Activated naive CD4-positive, alpha-beta T cell treated with anti-CD3 and anti-CD28 coated beads for 36 hours (primary cell): ENCODE measurements at regions of chr13 and their contacts with region 1.

Region 1: GRCh38 chr13:32682740-32683139 is 96.5 kb downstream of the PDS5B start:
- DNase-seq: no peak
- H3K4me3 Mint-ChIP-seq: no peak overlapping the region
- H3K27ac Mint-ChIP-seq: no peak overlapping the region
- H3K4me1 Mint-ChIP-seq: peaks cover 17% of the 10 kb centered on the region
- H3K27me3 Mint-ChIP-seq: no peaks in the 10 kb centered on the region

Region 2: GRCh38 chr13:32381539-32381938 is 301.2 kb before region 1 on chr13:
- CTCF ChIA-PET with region 1: no interaction called
- intact Hi-C with region 1: no loop called
- DNase-seq: peak; percentile 10
- H3K4me3 Mint-ChIP-seq: no peak overlapping the region
- H3K27ac Mint-ChIP-seq: no peak overlapping the region
- H3K4me1 Mint-ChIP-seq: no peaks in the 10 kb centered on the region
- H3K27me3 Mint-ChIP-seq: no peaks in the 10 kb centered on the region

Region 3: DNA sequence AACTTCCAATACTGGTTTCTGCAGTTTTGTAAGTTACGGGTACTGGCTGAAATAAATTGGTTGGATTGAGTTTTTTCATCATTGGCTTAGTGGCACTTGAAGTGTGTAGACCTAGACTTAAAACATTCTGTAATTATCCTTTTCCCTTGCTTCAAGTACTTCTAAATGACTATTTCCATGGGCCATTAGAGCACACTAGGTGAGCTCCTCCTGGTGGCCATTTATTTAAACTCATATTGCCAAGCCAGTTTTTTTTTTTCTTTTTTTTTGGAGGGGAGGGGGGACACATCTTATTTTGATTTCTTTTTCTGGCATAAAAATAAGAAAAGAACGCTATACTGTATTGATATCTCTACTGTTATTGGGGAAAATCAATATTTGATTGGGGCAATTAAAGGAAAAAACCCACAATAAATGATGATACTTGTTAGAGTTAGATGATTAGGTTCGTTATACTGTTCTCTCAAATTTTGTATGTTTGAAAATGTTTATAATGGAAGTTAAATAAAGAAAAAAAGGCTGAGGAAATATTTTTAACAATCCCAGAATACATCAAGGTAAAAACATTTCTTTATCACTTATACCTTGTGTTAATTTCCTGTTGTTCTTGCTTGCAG is 13.6 kb before region 1 on chr13:
- CTCF ChIA-PET with region 1: interaction called, 12 read pairs
- intact Hi-C with region 1: no loop called
- DNase-seq: peak; percentile 10
- H3K4me3 Mint-ChIP-seq: no peak overlapping the region
- H3K27ac Mint-ChIP-seq: no peak overlapping the region
- H3K4me1 Mint-ChIP-seq: peaks cover 6% of the 10 kb centered on the region
- H3K27me3 Mint-ChIP-seq: no peaks in the 10 kb centered on the region

Region 4: GRCh38 chr13:33204130-33204927 is 521.6 kb after region 1 on chr13:
- CTCF ChIA-PET with region 1: no interaction called
- intact Hi-C with region 1: no loop called
- DNase-seq: no peak
- H3K4me3 Mint-ChIP-seq: no peak overlapping the region
- H3K27ac Mint-ChIP-seq: no peak overlapping the region
- H3K4me1 Mint-ChIP-seq: peaks cover 7% of the 10 kb centered on the region
- H3K27me3 Mint-ChIP-seq: peaks cover 23% of the 10 kb centered on the region